Endothelial cell of umbilical vein (primary cell): ENCODE measurements at regions of chrX and their contacts with region 1.

Region 1: DNA sequence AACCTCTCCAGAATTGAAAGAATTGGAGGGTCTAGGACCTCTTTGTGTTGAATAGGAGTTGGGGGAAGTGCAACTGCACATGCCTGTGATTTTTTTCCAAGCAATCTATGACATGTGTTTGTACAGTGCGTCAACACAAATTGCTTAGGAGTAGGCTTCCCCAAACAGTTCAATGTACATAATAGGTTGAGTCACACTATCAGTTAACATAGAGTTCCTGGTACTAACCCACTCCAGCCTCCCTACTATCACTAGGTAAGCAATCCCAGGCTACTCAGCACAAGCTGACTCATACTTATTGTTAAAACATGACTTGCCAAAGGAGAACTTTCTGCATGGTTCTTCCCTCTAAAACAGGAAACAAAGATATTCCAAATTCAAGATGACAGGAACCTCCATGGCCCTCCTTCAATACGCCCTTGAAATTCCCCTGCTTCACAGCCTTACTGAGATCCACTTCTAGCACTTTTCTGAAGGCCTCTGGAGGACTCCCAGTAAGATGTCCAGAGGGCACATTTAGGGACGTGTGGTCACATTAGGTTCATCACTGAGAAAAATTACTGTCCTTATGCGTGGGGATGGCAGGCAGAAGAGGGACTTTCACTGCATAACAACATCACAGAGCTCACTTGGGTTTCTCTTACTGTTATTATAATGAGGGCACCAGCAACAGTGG is 8.4 kb upstream of the VSIG1 start:
- DNase-seq: peak; percentile 88
- H3K4me3 ChIP-seq: no peak overlapping the region
- H3K27ac ChIP-seq: peak overlapping the region; percentile 94
- H3K4me1 ChIP-seq: peaks cover 14% of the 10 kb centered on the region
- H3K27me3 ChIP-seq: no peaks in the 10 kb centered on the region
- CTCF ChIP-seq: no peak
- POLR2A ChIP-seq: no peak

Region 2: GRCh38 chrX:108025954-108026600 is 10.4 kb before region 1 on chrX:
- CTCF ChIA-PET with region 1: interaction called, 5 read pairs
- POLR2A ChIA-PET with region 1: no interaction called
- dilution Hi-C with region 1: no loop called
- intact Hi-C with region 1: loop called (anchors 1 kb)
- DNase-seq: peak; percentile 83
- H3K4me3 ChIP-seq: no peak overlapping the region
- H3K27ac ChIP-seq: peak overlapping the region; percentile 86
- H3K4me1 ChIP-seq: peaks cover 30% of the 10 kb centered on the region
- H3K27me3 ChIP-seq: no peaks in the 10 kb centered on the region
- CTCF ChIP-seq: no peak
- POLR2A ChIP-seq: no peak